ENCODE measurements at regions of chr11 and their contacts with region 1.

Region 1: GRCh38 chr11:59142530-59143507 is at the start of gene FAM111A:
- DNase-seq: peak; percentile 85
- CTCF ChIP-seq: peak; percentile 75

Region 2: DNA sequence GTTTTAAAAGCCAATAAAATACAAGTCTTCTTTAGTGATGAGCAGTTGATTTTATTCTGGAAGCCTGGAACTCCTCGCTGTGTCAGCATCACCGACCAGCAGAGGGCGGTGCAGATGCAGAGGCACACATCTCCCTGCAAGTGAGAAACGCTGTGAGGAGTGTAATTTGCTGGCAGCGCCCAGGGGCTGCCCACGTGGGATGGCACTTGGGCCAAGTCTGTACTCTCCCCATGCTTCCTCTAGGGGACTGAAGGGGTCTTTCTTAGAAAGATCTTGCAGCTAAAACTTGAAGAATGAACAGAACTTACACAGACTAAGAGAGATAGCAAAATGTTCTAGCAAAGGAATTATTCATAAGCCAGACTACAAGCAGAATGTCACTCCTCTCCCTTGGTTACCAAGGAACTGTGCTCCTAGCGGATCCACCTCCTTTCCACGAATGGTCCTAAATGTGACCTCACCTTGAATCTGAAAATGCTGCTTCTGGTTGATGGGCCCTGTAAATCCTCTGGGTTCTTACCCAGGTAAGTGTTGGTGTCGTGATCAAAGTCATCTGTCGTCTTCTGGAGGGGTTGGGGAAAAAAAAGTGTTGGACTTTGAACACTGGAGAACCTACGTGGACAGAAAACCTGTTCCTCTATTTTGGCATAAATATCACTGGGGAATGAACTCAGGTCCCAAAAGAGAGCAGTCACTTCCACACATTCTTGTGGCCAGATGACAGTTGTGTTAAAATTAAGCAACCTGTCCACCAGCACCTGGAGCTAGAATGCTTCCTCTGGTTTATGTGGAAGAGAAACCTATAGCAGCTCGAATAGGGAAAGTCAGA is 488.5 kb before region 1 on chr11:
- in situ Hi-C with region 1: loop called (anchors 25 kb)
- DNase-seq: peak; percentile 59
- CTCF ChIP-seq: peak; percentile 96

Region 3: DNA sequence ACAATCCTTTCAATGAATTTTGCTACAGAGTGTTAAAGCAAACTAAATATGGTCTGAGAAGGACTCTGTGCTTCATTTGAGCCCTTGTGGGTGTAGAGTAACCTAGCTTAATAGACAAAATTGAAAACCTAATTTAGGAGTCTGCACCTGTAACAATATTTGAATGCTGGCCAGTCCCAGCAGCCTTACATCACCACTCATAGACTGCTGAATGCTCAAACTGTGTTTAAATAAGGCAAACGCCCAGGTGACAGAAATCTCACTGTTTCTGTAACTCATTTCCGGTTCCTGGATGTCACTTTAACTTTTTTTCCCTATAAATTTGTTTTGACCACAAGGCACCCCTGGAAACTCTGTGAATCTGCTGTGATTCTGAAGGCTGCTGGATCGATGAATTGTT is 102.2 kb before region 1 on chr11:
- in situ Hi-C with region 1: no loop called
- DNase-seq: no peak
- CTCF ChIP-seq: no peak